CD4-positive, alpha-beta T cell (primary cell): ENCODE measurements at regions of chr15 and their contacts with region 1.

Region 1: GRCh38 chr15:63497642-63498467 is 6.5 kb upstream of the USP3 start:
- DNase-seq: peak; percentile 56 to 93 (median 73)
- ATAC-seq: peak; percentile 74
- H3K4me3 ChIP-seq: peak overlapping the region; percentile 37
- H3K4me3 Mint-ChIP-seq: no peak overlapping the region
- H3K27ac ChIP-seq: peak overlapping the region; percentile 88 to 99
- H3K27ac Mint-ChIP-seq: no peak overlapping the region
- H3K4me1 ChIP-seq: peaks cover 94% of the 10 kb centered on the region
- H3K4me1 Mint-ChIP-seq: peaks cover 75% of the 10 kb centered on the region
- H3K27me3 ChIP-seq: no peaks in the 10 kb centered on the region
- H3K27me3 Mint-ChIP-seq: no peaks in the 10 kb centered on the region
- CTCF ChIP-seq: no peak

Region 2: GRCh38 chr15:63481105-63481810 is 16.6 kb before region 1 on chr15:
- CTCF ChIA-PET with region 1: interaction called, 20 read pairs
- POLR2A ChIA-PET with region 1: interaction called, 367 read pairs
- intact Hi-C with region 1: loop called in 1 of 2 experiments (anchors 1 kb)
- DNase-seq: peak in 2 of 14 experiments; percentile 61 to 69
- ATAC-seq: no peak
- H3K4me3 ChIP-seq: no peak overlapping the region
- H3K4me3 Mint-ChIP-seq: peak overlapping the region; percentile 26
- H3K27ac ChIP-seq: peak overlapping the region; percentile 71 to 91
- H3K27ac Mint-ChIP-seq: peak overlapping the region; percentile 95
- H3K4me1 ChIP-seq: peaks cover 89% of the 10 kb centered on the region
- H3K4me1 Mint-ChIP-seq: peaks cover 81% of the 10 kb centered on the region
- H3K27me3 ChIP-seq: no peaks in the 10 kb centered on the region
- H3K27me3 Mint-ChIP-seq: no peaks in the 10 kb centered on the region
- CTCF ChIP-seq: no peak

Region 3: GRCh38 chr15:63487076-63487757 is 10.6 kb before region 1 on chr15:
- CTCF ChIA-PET with region 1: interaction called, 40 read pairs
- POLR2A ChIA-PET with region 1: interaction called, 367 read pairs
- intact Hi-C with region 1: loop called in 1 of 2 experiments (anchors 1 kb)
- DNase-seq: peak; percentile 79 to 93 (median 88)
- ATAC-seq: peak; percentile 90
- H3K4me3 ChIP-seq: no peak overlapping the region
- H3K4me3 Mint-ChIP-seq: peak overlapping the region; percentile 2
- H3K27ac ChIP-seq: peak overlapping the region in 1 of 2 donors; percentile 33
- H3K27ac Mint-ChIP-seq: peak overlapping the region; percentile 29
- H3K4me1 ChIP-seq: peaks cover 67% of the 10 kb centered on the region
- H3K4me1 Mint-ChIP-seq: peaks cover 67% of the 10 kb centered on the region
- H3K27me3 ChIP-seq: no peaks in the 10 kb centered on the region
- H3K27me3 Mint-ChIP-seq: no peaks in the 10 kb centered on the region
- CTCF ChIP-seq: peak; percentile 96